ENCODE measurements at regions of chr4 and their contacts with region 1.

Region 1: DNA sequence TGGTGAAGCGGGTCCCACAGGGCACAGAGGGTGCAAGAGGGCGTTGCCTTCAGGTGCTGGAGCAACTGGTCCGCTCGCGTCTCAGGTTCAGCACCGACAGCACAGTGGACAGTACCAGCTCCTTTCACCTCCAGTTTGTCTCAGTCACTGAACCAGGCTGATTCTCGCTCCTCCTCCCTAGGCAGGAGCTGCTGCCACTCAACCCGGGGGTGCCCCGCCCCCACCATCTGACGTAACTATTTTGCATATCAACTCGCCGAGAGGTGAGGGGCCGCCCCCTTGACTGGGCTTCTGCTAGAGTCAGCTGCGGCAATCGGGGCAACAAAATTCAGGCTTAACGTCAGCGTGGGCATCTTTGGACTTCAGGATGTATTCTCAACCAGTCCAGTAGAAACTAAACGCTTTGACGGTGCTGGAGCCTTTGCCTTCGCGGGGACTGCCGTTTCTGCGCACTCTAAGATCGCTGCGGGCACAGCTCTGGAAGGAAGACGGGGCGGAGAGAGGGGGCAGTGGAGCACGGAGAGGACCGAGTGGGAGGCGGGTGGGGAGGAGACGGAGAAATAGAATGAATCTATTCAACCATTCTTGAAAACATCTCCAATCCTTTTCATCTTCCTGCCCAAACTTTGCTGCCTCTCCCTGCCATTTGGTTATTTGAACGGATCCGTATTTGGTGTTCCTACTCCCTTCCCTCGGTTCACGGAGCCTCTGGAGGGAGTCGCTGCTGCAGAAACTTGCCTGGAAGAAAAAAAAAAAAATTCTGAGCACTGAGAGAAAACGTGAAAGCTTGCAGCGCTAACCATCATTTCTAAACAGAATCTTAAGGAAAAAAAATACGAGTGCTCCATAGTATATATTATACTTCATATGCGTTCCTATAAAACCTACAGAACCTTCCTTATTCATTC is at the start of gene FSTL5:
- DNase-seq: peak; percentile 90
- H3K4me3 ChIP-seq: peak within 1 kb of the TSS; percentile 61
- H3K27ac ChIP-seq: no peak within 1 kb of the TSS
- H3K4me1 ChIP-seq: no peaks in the 10 kb centered on the region
- H3K27me3 ChIP-seq: no peaks in the 10 kb centered on the region
- CTCF ChIP-seq: no peak
- total RNA-seq, gene FSTL5: 0.15 and 0.28 TPM in 2 replicates

Region 2: GRCh38 chr4:161252520-161253141 is 911.5 kb before region 1 on chr4:
- CTCF ChIA-PET with region 1: no interaction called
- POLR2A ChIA-PET with region 1: no interaction called
- intact Hi-C with region 1: loop called (anchors 10 kb)
- DNase-seq: peak; percentile 45
- H3K4me3 ChIP-seq: no peak overlapping the region
- H3K27ac ChIP-seq: no peak overlapping the region
- H3K4me1 ChIP-seq: no peaks in the 10 kb centered on the region
- H3K27me3 ChIP-seq: no peaks in the 10 kb centered on the region
- CTCF ChIP-seq: peak; percentile 80

Region 3: DNA sequence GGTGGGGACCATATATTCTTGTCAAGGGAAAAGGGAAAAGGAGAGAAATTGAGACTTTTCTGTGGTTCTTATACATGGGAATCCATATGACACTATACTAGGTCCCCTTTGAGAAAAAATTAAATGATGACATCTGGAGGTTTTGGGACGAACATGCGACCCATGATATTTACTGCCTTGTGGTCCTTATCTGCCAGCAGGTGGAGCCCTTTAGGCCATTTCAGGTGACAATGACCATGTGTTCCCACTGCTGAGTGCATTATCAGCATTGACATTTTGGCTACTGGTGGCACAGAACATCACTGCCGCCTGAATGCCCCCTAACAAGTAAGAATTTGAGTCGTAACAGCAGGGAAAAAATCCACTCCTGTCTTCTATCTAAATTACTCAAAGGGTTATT is 843.7 kb before region 1 on chr4:
- CTCF ChIA-PET with region 1: no interaction called
- POLR2A ChIA-PET with region 1: no interaction called
- intact Hi-C with region 1: loop called (anchors 10 kb)
- DNase-seq: peak; percentile 63
- H3K4me3 ChIP-seq: no peak overlapping the region
- H3K27ac ChIP-seq: no peak overlapping the region
- H3K4me1 ChIP-seq: no peaks in the 10 kb centered on the region
- H3K27me3 ChIP-seq: no peaks in the 10 kb centered on the region
- CTCF ChIP-seq: peak; percentile 64